Heart right ventricle (tissue), 16 donors: ENCODE measurements at regions of chr19 and their contacts with region 1.

Region 1: DNA sequence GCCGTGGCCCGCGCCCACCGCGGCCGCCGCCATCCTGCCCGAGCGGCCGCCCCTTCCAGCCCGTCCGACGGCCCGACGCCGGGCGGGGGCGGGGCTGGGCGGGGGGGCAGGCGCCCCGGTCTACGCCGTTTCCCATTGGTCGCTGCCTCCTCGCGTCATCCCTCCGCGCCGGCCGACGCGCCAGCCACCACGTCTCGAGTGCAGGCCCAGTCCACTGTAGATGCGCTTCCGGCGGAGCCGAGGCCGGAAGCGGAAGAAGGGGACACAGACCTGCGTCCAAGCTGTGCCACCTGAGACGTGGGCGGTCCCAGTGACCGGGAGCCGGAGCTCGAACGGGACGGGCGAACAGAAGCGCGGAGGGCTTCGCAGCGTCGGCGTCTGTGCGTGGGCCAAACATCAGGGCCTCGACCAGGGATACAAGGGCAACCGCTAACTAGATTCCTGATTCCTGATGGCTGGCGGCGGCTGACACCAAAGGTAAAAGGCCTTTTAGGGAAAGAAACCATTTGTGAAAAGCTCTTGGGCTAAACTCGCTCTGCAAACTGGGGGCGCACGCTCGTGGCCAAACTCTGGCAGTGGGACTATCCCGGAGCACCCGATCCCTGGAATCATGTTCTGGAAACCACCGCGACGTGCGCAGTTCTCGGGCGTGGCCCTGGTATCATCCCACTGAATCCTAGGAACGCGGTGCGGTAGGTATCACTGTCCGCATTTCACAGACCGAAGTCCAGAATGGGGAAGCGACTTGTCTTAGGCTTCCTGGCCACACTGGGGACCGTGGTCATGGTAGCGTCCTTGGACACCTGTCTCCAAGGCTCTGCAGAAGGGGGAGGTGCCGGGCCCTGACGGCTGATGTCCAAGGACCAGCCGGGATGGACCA is at the start of gene SLC35E1:
- DNase-seq: peak; percentile 94 to 96
- ATAC-seq: peak; percentile 96 to 99 (median 98)
- H3K4me3 ChIP-seq: peak within 1 kb of the TSS; percentile 63 to 97 (median 80)
- H3K27ac ChIP-seq: peak within 1 kb of the TSS; percentile 61 to 91 (median 86)
- H3K4me1 ChIP-seq: peaks cover 14 to 58% (median 36%) of the 10 kb centered on the region in 9 donors
- H3K27me3 ChIP-seq: no peaks in the 10 kb centered on the region
- CTCF ChIP-seq: no peak
- total RNA-seq, gene SLC35E1: 20.8 to 29.0 (median 23.6) TPM

Region 2: DNA sequence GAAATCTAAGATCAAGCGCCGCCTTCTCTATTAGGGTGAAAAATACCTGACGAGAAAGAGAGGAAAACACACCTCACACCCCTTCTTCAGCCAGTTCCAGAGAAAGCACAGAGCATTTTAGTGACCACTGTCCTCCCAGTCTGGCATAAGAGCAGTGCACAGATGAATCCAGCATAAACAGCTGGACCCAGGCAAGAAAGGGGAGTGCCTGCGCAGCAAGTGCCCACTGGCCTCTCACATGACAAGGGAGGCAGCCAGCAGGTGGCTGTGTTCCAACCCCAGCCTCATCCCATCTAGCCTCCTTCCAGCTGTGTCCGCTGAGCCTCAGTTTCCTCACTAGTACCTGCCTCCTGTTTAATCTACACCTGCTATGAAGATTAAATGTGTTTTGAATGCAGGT is 47.4 kb after region 1 on chr19:
- intact Hi-C with region 1: loop called (anchors 5 to 10 kb)
- DNase-seq: no peak
- ATAC-seq: no peak
- H3K4me3 ChIP-seq: no peak overlapping the region
- H3K27ac ChIP-seq: peak overlapping the region in 1 of 10 donors; percentile 11
- H3K4me1 ChIP-seq: peaks cover 11 to 90% (median 54%) of the 10 kb centered on the region in 9 donors
- H3K27me3 ChIP-seq: no peaks in the 10 kb centered on the region
- CTCF ChIP-seq: no peak

Region 3: GRCh38 chr19:16659831-16660708 is 87.5 kb after region 1 on chr19 and contains the start of gene SMIM7:
- intact Hi-C with region 1: loop called in 1 of 10 experiments (anchors 2 kb)
- DNase-seq: peak; percentile 99
- ATAC-seq: peak; percentile 97 to 99 (median 98)
- H3K4me3 ChIP-seq: peak within 1 kb of the TSS; percentile 59 to 97 (median 76)
- H3K27ac ChIP-seq: peak within 1 kb of the TSS; percentile 82 to 98 (median 92)
- H3K4me1 ChIP-seq: peaks cover 11 to 65% (median 51%) of the 10 kb centered on the region in 9 donors
- H3K27me3 ChIP-seq: no peaks in the 10 kb centered on the region
- CTCF ChIP-seq: peak in 5 of 9 donors; percentile 14 to 51 (median 39)
- total RNA-seq, gene SMIM7: 32.0 to 43.2 (median 37.4) TPM